Dorsolateral prefrontal cortex (tissue), 120 donors: ENCODE measurements at regions of chr7 and their contacts with region 1.

Region 1: GRCh38 chr7:101287032-101287431 is 34.6 kb downstream of the IFT22 start:
- DNase-seq: no peak
- H3K4me3 ChIP-seq: no peak overlapping the region
- H3K27ac ChIP-seq: no peak overlapping the region
- H3K27me3 ChIP-seq: peaks cover 0 to 13% (median 4%) of the 10 kb centered on the region in 45 donors
- CTCF ChIP-seq: no peak

Region 2: DNA sequence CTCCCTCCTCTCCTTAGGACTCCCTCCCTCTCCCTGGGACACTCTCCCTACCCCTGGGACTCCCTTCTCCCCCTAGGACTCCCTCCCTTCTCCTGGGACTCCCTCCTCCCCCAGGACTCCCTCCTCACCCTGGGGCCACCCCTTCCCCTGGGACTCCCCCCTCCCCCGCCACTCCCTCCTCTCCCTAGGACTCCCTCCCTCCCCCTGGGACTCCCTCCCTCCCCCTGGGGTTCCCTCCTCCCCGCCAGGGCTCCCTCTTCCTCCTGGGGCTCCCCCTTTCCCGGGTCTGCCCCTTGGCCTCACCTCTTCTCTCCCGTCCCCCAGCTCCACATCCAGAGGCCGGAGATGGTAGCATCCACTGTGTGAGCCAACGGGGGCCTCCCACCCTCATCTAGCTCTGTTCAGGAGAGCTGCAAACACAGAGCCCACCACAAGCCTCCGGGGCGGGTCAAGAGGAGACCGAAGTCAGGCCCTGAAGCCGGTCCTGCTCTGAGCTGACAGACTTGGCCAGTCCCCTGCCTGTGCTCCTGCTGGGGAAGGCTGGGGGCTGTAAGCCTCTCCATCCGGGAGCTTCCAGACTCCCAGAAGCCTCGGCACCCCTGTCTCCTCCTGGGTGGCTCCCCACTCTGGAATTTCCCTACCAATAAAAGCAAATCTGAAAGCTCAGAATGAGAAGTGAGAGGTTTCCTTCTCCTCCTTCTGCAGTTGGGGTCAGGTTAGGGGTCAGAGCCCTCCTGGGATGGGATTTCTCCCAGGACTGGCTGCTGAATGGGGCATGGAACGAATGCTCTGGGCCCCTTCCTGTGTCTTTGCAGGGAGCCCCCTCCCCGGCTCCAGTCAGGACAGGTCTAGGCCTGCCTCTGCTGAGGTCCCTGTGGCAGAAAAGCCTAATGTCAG is 268.5 kb before region 1 on chr7:
- intact Hi-C with region 1: no loop called
- DNase-seq: no peak
- H3K4me3 ChIP-seq: no peak overlapping the region
- H3K27ac ChIP-seq: no peak overlapping the region
- H3K27me3 ChIP-seq: peaks cover 0 to 32% (median 0%) of the 10 kb centered on the region in 45 donors
- CTCF ChIP-seq: no peak

Region 3: DNA sequence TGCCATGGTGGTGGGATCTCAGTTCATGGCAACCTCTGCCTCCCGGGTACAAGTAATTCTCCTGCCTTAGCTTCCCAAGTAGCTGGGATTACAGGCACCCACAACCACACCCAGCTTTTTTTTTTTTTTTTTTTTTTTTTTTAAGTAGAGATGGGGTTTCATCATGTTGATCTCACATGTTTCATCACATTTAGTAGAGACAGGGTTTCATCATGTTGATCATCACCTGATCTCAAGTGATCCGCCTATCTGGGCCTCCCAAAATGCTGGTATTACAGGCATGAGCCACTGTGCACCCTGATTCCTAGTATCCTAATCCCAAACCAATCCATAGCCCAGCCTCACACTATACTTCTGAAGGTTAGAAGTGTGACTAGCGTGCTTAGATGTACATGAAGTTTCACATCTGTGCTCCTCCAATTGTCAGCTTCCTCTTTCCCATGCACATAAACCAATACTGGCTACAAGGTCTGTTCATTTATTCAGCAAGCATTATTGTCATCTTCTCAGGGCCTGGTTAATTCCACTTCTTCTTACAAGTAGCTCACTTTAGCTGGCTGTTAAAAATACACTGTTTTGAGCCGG is 100.1 kb before region 1 on chr7:
- intact Hi-C with region 1: no loop called
- DNase-seq: no peak
- H3K4me3 ChIP-seq: no peak overlapping the region
- H3K27ac ChIP-seq: no peak overlapping the region
- H3K27me3 ChIP-seq: peaks cover 0 to 7% (median 0%) of the 10 kb centered on the region in 45 donors
- CTCF ChIP-seq: no peak

Region 4: DNA sequence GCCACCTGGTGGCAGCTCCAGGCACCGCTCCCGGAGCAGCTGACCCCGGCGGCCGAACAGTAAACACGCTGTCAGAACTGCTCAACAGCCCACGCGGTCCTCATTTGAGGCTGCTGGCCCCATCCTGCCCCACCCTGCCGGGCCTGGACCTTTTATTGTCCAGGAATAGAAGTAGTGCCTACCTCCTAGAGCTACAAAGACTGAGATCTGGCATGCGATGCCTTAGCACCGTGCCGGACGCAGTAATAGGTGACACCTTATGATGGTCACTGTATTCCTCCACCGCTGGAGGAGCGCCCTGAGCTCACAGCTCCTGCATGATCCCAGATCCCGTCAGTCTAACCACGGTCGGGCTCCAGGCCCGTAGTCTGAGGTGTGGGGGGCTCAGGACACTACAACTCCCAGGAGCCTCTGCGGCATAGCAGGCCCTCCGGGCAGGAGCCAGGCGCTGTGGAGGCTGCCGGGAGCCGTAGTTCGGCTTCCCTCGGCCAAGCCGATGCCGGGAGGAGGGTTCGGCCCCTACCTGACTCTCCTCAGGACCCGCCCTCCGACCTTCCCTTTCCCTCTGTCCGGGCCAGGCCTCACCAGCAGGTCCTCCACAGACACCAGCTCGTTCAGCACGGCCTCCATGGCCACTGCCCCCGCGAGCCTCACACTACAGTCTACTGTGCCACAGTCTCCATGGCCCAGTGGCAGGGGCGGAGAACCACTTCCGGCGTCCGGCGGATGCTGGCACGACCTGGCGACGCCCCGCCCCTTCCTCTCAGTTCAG is 42.5 kb before region 1 on chr7 and contains the start of gene FIS1:
- intact Hi-C with region 1: loop called in 1 of 2 experiments (anchors 1 kb)
- DNase-seq: peak; percentile 89 to 96 (median 94)
- H3K4me3 ChIP-seq: peak within 1 kb of the TSS; percentile 63 to 100 (median 90)
- H3K27ac ChIP-seq: peak within 1 kb of the TSS; percentile 95 to 100 (median 100)
- H3K27me3 ChIP-seq: no peaks in the 10 kb centered on the region
- CTCF ChIP-seq: peak in 53 of 56 donors; percentile 73 to 96 (median 89)
- total RNA-seq, gene FIS1: 134 to 359 (median 209) TPM